ENCODE measurements at regions of chr4 and their contacts with region 1.

Region 1: DNA sequence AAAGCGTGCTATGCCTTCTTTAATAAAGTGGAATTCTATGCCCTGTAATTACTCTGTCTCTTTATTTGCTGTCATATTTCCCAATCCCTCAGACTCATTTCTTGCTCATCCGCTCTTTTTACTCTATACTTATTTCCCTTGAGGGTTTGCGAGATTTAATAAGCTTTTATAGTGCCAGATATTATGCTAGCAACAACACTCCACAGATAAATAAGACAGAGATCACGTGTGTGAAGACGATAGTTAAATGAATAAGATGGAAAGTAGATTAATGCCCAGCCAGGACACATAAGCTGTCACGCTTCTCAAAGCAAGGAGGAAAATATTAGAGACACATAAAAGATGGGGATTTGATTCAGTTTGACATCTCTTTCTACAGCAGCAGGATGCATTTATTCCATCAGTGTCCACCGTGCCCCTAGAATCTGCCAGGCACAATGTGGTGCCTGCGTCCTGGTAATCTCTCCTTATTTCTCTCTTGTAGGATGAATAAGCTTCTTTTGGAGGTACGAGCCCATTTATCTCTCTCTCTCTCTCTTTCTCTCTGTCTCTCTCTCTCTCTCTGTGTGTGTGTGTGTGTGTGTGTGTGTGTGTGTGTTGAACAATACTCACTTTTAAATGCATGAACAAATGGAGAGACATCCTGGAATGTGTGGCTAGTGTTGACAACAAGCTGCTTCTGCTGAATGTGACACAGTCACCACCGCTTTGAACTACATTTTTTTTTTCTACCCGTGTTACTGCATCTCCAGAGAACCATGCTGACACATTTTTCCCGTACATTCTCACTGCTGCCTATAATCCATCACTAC is 48.2 kb downstream of the TMEM156 start:
- DNase-seq: no peak
- H3K4me3 ChIP-seq: no peak overlapping the region
- H3K27me3 ChIP-seq: no peaks in the 10 kb centered on the region
- CTCF ChIP-seq: no peak

Region 2: GRCh38 chr4:38500433-38500832 is 483.6 kb before region 1 on chr4:
- CTCF ChIA-PET with region 1: no interaction called
- POLR2A ChIA-PET with region 1: no interaction called
- DNase-seq: no peak
- H3K4me3 ChIP-seq: no peak overlapping the region
- H3K27me3 ChIP-seq: no peaks in the 10 kb centered on the region
- CTCF ChIP-seq: no peak

Region 3: DNA sequence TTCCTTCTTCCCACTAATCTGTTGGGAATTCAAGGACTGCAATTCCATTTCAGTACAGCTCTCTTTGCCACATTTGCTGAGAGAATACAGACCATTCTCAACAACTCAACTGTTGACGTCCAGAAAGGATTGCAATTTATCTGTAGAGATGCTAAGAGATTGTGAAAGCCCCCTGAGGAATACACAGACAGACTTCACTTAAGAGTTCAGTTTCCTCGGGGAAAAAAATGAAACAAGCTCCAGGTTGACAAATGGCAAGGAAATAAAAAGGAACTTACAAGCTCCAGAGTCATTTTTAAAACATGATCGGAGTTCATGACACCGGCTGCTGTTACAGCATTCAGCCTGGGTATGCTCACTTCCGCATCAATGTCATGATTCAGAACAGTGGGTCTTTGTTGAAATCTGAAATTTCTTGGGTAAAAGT is 215.0 kb before region 1 on chr4:
- CTCF ChIA-PET with region 1: no interaction called
- POLR2A ChIA-PET with region 1: no interaction called
- DNase-seq: no peak
- H3K4me3 ChIP-seq: no peak overlapping the region
- H3K27me3 ChIP-seq: peaks cover 6% of the 10 kb centered on the region
- CTCF ChIP-seq: no peak

Region 4: DNA sequence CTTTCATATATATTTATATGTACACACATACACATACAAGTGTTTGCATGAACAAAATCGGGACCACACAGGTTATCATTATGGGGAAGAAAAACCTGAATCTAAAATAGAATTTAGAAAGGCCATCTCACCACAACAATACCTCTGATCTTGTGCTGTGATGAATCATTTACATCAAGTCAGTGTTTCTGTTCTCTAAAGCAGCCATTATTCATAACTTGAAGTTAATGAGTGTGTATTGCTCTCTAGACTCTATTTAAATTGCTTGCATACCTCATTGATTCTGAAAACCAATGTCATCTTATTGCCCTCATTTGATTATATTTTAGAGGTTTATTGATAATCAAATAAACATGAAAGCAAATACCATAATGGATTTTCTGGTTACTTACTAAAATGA is 44.8 kb before region 1 on chr4:
- CTCF ChIA-PET with region 1: no interaction called
- POLR2A ChIA-PET with region 1: interaction called, 10 read pairs
- DNase-seq: no peak
- H3K4me3 ChIP-seq: no peak overlapping the region
- H3K27me3 ChIP-seq: no peaks in the 10 kb centered on the region
- CTCF ChIP-seq: no peak

Region 5: GRCh38 chr4:40228497-40229365 is 1244.7 kb after region 1 on chr4:
- CTCF ChIA-PET with region 1: no interaction called
- POLR2A ChIA-PET with region 1: interaction called, 19 read pairs
- DNase-seq: no peak
- H3K4me3 ChIP-seq: no peak overlapping the region
- H3K27me3 ChIP-seq: peaks cover 5% of the 10 kb centered on the region
- CTCF ChIP-seq: peak; percentile 27; the same call in 1 of the 2 replicates

Measured in BJ (cell line).